ENCODE measurements at regions of chr2 and their contacts with region 1.

Region 1: DNA sequence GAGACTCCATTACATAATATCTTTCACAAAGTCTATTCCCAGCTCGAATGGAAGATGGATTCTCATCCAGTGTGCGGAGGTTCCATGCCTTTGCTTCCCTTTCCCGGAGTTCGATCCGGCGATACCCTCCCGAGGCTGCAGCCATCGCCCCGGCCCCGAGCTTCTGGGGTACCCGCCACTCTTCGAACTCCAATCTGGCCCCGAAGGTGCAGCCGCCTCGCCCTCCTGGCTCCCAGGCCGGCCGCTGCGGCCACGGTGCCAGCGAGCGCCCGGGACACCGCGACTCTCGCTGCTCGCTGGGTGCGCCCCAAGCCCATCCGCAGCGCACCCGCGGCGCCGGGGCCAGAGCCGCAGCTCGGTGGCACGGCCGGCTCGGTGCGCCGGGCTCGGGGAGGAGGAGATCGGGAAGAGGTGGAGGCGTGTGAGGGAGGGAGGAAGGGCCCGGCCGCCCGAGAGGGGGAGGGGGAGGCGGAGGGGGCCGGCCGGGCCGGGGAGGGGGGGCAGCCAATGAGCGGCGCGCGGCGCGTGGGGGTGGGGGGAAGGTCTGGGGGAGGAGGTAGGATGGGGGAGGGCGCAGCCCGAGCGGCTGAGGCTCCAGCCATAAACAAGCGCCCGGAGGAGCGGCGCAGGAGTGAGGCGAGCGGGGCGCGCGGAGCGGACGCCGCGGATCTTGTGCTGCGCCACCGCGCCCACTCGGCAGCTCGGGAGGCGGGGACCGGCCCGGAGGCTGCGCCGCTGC is at the start of gene CRIM1:
- DNase-seq: peak; percentile 42
- H3K4me3 Mint-ChIP-seq: peak within 1 kb of the TSS; percentile 80
- H3K27ac Mint-ChIP-seq: peak within 1 kb of the TSS; percentile 57
- H3K4me1 Mint-ChIP-seq: peaks cover 44% of the 10 kb centered on the region
- H3K27me3 Mint-ChIP-seq: peaks cover 59% of the 10 kb centered on the region
- total RNA-seq, gene CRIM1: 15.3 and 17.6 TPM in 2 replicates

Region 2: DNA sequence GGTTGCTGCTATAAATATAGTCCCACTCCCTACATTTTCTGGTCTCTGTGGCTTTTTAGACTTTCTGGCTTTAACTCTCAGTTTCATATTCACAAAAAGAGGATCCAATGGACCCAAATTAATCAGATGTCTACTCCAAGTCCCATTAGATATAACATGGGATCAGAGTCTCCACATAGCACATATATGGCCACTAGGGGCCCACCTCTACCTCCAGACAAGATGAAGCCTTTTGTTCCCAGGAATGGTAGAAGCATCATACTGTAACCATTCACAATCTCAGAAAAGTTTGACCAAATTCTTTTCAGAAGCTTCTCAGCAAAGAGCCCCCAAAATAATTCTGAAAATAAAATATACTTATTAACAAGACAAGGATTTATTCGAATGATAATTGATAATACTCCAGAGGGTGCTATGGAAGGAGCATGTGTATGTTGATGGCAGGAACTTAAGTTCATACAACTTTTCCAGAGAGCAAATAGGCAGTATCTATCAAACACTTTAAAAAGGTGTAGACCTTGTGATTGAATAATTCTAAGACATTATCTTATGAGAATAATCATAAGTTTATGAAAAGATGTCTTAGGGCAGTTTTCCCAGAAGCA is 382.1 kb before region 1 on chr2:
- intact Hi-C with region 1: loop called (anchors 1 kb)
- DNase-seq: no peak
- H3K4me3 Mint-ChIP-seq: no peak overlapping the region
- H3K27ac Mint-ChIP-seq: no peak overlapping the region
- H3K4me1 Mint-ChIP-seq: no peaks in the 10 kb centered on the region
- H3K27me3 Mint-ChIP-seq: peaks cover 16% of the 10 kb centered on the region

Region 3: GRCh38 chr2:36246320-36246990 is 108.9 kb before region 1 on chr2:
- intact Hi-C with region 1: loop called (anchors 1 kb)
- DNase-seq: peak; percentile 26
- H3K4me3 Mint-ChIP-seq: peak overlapping the region; percentile 21
- H3K27ac Mint-ChIP-seq: peak overlapping the region; percentile 94
- H3K4me1 Mint-ChIP-seq: peaks cover 71% of the 10 kb centered on the region
- H3K27me3 Mint-ChIP-seq: peaks cover 6% of the 10 kb centered on the region

Region 4: GRCh38 chr2:36461039-36461681 is 105.8 kb after region 1 on chr2:
- intact Hi-C with region 1: loop called (anchors 2 kb)
- DNase-seq: no peak
- H3K4me3 Mint-ChIP-seq: no peak overlapping the region
- H3K27ac Mint-ChIP-seq: no peak overlapping the region
- H3K4me1 Mint-ChIP-seq: no peaks in the 10 kb centered on the region
- H3K27me3 Mint-ChIP-seq: peaks cover 2% of the 10 kb centered on the region

Region 5: DNA sequence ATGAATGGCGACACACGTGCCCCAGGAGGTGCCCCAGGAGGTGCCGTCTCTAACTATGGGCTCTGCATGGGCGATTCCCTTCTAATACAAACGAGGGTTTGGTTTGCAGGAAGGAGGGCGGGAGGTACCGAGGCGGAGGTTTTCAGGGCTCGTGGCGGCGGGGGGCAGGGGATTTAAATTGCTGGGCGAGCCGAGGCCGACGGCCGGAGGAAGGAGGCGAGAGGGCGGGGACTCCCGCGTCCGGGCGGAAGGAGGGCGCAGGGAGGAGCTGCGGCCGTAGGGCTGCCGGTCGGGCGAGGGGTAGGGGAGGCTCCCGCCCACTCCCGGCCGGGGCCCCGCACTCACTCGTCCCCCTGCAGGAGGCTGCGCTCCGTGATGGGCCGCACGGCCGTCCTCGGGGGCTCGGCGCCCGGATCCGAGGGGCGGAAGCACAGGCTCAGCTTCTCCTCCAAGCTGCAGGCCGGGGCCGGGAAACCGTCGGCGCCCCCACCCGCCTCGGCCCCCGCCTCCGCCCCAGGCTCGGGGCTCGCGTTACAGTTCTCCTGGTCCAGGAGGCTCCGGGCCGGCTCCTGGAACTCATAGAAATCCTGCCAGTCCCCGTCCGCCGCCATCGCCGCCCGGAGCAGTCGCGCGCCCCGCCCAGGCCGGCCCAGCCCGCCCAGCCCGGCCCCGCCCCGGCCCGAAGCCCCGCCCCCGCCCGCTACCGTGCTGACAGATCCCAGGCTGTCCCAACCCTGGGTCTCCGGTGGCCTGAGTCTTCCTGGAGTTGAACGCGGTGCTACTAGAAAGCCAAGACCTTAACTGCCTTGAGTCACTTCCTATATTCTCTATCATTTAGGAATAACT is 242.4 kb after region 1 on chr2 and contains the start of gene FEZ2:
- intact Hi-C with region 1: loop called (anchors 2 kb)
- DNase-seq: peak; percentile 73
- H3K4me3 Mint-ChIP-seq: peak within 1 kb of the TSS; percentile 93
- H3K27ac Mint-ChIP-seq: peak within 1 kb of the TSS; percentile 89
- H3K4me1 Mint-ChIP-seq: peaks cover 29% of the 10 kb centered on the region
- H3K27me3 Mint-ChIP-seq: peaks cover 5% of the 10 kb centered on the region
- total RNA-seq, gene FEZ2: 14.0 and 14.9 TPM in 2 replicates

Region 6: GRCh38 chr2:36785179-36785795 is 430.0 kb after region 1 on chr2:
- intact Hi-C with region 1: loop called (anchors 2 kb)
- DNase-seq: peak; percentile 55
- H3K4me3 Mint-ChIP-seq: no peak overlapping the region
- H3K27ac Mint-ChIP-seq: no peak overlapping the region
- H3K4me1 Mint-ChIP-seq: peaks cover 3% of the 10 kb centered on the region
- H3K27me3 Mint-ChIP-seq: peaks cover 28% of the 10 kb centered on the region

Region 7: DNA sequence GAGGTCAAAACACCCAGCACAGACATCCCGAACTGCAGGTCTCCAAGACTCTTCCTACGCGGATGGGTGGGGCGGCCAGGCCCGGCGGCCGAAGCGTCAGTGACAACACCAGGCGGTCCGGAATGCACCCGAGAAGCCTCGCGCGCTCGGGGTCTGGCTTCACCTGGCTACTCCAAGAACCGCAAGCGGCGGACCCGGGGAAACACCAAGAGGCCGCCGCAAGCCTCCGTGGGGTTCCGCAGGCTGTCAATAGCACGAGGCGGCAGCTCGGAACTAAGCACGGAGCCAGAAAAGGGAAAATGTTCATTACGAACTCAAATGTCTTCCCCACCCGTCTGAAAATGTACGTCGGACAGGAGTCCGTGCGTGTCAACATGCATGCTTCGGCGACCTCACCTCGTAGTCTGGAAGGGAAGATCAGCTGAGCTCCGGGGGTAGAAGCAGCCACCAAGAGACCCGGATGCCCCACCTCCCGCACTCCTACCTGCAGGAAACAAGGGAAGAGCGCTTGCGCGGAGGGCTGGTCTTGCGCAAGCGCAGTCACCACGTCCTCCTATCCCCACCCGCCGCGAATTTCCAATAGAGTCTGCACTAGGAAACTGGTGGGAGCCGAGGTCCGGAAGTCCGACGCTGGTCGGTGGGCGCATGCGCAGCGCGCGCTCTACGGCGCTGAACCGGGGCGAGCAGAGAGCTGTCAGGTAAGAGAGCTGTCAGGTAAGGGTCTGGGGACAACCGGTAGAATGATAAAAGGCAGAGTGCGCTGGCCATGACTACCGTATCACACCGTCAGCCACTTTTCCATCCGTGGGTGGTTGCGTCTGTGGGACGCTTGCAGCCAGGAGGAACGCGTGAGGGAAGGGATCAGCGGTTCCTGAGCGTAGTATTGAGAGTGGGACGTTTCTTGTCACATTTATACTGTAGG is 728.8 kb after region 1 on chr2 and contains the starts of genes GPATCH11 and HEATR5B:
- intact Hi-C with region 1: loop called (anchors 2 kb)
- DNase-seq: peak; percentile 92
- H3K4me3 Mint-ChIP-seq: no peak within 1 kb of the TSS
- H3K27ac Mint-ChIP-seq: peak within 1 kb of the TSS; percentile 19
- H3K4me1 Mint-ChIP-seq: peaks cover 26% of the 10 kb centered on the region
- H3K27me3 Mint-ChIP-seq: no peaks in the 10 kb centered on the region
- total RNA-seq, gene GPATCH11: 16.6 and 17.6 TPM in 2 replicates
- total RNA-seq, gene HEATR5B: 15.7 and 16.0 TPM in 2 replicates